ENCODE measurements at regions of chr3 and their contacts with region 1.

Region 1: GRCh38 chr3:128680602-128681368 is 30.2 kb upstream of the RPN1 start:
- DNase-seq: peak; percentile 98
- H3K4me3 Mint-ChIP-seq: peak overlapping the region; percentile 94
- H3K27ac Mint-ChIP-seq: peak overlapping the region; percentile 97
- H3K4me1 Mint-ChIP-seq: peaks cover 49% of the 10 kb centered on the region
- H3K27me3 Mint-ChIP-seq: peaks cover 9% of the 10 kb centered on the region

Region 2: DNA sequence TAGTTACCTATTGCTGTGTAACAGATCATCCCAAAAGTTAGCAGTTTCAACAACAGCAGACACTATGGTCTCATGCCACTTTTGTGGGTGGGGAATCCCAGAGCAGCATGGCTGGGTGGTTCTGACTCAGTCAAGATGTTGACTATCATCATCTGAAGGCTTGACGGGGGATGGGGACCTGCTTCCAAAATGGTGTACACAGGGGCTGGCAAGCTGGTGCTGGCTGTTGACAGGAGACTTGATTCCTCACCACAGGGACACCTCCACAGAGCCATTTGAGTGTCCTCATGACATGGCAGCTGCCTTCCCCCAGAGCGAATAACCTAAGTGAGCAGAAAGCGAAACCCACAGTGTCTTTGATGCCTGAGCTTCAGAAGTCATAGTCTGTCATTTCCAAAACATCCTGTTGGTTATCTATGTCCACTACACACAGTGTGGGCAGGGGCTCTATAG is 233.2 kb before region 1 on chr3:
- CTCF ChIA-PET with region 1: no interaction called
- DNase-seq: peak; percentile 68
- H3K4me3 Mint-ChIP-seq: no peak overlapping the region
- H3K27ac Mint-ChIP-seq: peak overlapping the region; percentile 94
- H3K4me1 Mint-ChIP-seq: peaks cover 37% of the 10 kb centered on the region
- H3K27me3 Mint-ChIP-seq: peaks cover 16% of the 10 kb centered on the region

Region 3: GRCh38 chr3:128650096-128651050 is 30.4 kb before region 1 on chr3 and contains the start of gene RPN1:
- CTCF ChIA-PET with region 1: interaction called, 11 read pairs
- DNase-seq: peak; percentile 98
- H3K4me3 Mint-ChIP-seq: peak within 1 kb of the TSS; percentile 83
- H3K27ac Mint-ChIP-seq: peak within 1 kb of the TSS; percentile 92
- H3K4me1 Mint-ChIP-seq: peaks cover 45% of the 10 kb centered on the region
- H3K27me3 Mint-ChIP-seq: no peaks in the 10 kb centered on the region

Region 4: GRCh38 chr3:128725932-128726690 is 45.3 kb after region 1 on chr3 and contains the start of gene RAB7A:
- CTCF ChIA-PET with region 1: interaction called, 10 read pairs
- DNase-seq: peak; percentile 97
- H3K4me3 Mint-ChIP-seq: peak within 1 kb of the TSS; percentile 84
- H3K27ac Mint-ChIP-seq: peak within 1 kb of the TSS; percentile 96
- H3K4me1 Mint-ChIP-seq: peaks cover 57% of the 10 kb centered on the region
- H3K27me3 Mint-ChIP-seq: peaks cover 15% of the 10 kb centered on the region

Region 5: DNA sequence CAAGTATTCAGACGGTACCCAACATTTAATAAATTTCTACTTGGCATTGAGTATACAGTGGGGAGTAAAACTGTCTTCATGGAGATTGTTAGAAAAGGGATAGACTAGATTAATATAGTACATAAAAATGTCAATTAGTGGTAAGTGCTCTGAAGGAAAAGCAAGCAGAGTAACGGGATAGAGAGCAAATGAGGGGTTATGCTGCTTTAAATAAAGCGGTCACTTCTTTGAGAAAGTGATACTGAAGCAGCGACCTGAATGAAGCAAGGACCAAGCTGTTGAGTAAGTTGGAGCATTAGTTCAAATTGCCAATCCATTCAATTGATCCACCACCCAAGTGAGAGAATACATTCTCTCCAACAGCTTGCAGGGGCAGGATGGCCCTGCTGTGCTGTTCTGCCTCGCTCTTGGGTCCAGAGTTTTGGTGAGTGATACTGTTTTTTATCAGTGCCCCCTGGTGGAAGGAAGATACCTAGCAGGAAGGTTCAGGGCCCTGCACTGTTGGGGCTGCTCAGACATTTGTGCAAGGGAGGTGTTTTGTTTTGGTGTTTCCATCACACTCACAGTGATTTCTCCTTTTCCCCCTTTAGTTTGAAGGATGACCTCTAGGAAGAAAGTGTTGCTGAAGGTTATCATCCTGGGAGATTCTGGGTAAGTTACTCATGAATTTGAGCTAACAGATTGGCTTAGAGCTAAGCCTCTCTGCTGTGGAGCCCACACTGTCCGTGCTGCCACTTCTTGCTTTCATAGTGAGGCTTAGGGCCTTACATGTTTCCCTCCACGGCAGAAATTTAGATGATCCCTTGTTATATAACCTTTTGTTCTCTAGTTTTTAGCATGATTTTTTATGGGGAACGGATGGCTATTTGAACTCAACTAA is 114.2 kb after region 1 on chr3:
- CTCF ChIA-PET with region 1: interaction called, 146 read pairs
- DNase-seq: peak; percentile 77
- H3K4me3 Mint-ChIP-seq: peak overlapping the region; percentile 3
- H3K27ac Mint-ChIP-seq: peak overlapping the region; percentile 82
- H3K4me1 Mint-ChIP-seq: peaks cover 78% of the 10 kb centered on the region
- H3K27me3 Mint-ChIP-seq: no peaks in the 10 kb centered on the region

Region 6: GRCh38 chr3:128879125-128879969 is 198.6 kb after region 1 on chr3 and contains the start of gene ACAD9:
- CTCF ChIA-PET with region 1: interaction called, 26 read pairs
- DNase-seq: peak; percentile 97
- H3K4me3 Mint-ChIP-seq: peak within 1 kb of the TSS; percentile 86
- H3K27ac Mint-ChIP-seq: peak within 1 kb of the TSS; percentile 88
- H3K4me1 Mint-ChIP-seq: peaks cover 67% of the 10 kb centered on the region
- H3K27me3 Mint-ChIP-seq: peaks cover 13% of the 10 kb centered on the region

Measured in activated naive CD4-positive, alpha-beta T cell treated with anti-CD3 and anti-CD28 coated beads, Interleukin-2, amount 10 ng/mL, durations not matched to agents 7 days and 5 days (primary cell).